A673 (cell line): ENCODE measurements at regions of chrX and their contacts with region 1.

Region 1: DNA sequence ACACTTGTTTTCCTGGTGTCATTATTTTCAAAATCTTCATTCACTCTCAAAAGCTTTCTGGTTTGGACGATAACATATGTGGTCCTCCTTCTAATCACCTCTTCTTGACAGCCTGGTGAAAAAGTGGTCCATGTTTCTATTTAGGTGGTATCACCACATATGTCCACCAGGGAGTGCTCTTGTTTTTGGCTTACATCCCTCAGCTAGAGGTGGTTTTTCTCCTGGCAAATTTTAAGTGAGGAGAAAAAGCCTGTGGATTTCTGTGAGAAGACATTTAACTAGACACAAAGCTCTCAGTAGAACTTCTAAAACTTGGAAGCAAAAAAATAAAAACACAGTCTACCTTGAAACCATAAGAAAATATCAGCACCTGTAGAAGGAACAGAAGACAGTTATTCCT is 58.0 kb upstream of the FRMPD4 start:
- DNase-seq: peak; percentile 37
- H3K4me3 ChIP-seq: no peak overlapping the region
- H3K27ac ChIP-seq: no peak overlapping the region
- H3K4me1 ChIP-seq: no peaks in the 10 kb centered on the region
- H3K27me3 ChIP-seq: no peaks in the 10 kb centered on the region
- CTCF ChIP-seq: peak; percentile 57

Region 2: GRCh38 chrX:12567857-12568256 is 487.6 kb after region 1 on chrX:
- CTCF ChIA-PET with region 1: no interaction called
- POLR2A ChIA-PET with region 1: no interaction called
- intact Hi-C with region 1: loop called (anchors 10 kb)
- DNase-seq: peak; percentile 14
- H3K4me3 ChIP-seq: no peak overlapping the region
- H3K27ac ChIP-seq: no peak overlapping the region
- H3K4me1 ChIP-seq: no peaks in the 10 kb centered on the region
- H3K27me3 ChIP-seq: no peaks in the 10 kb centered on the region
- CTCF ChIP-seq: peak; percentile 73

Region 3: GRCh38 chrX:12701628-12702027 is 621.4 kb after region 1 on chrX:
- CTCF ChIA-PET with region 1: no interaction called
- POLR2A ChIA-PET with region 1: no interaction called
- intact Hi-C with region 1: loop called (anchors 5 kb)
- DNase-seq: peak; percentile 70
- H3K4me3 ChIP-seq: no peak overlapping the region
- H3K27ac ChIP-seq: no peak overlapping the region
- H3K4me1 ChIP-seq: no peaks in the 10 kb centered on the region
- H3K27me3 ChIP-seq: peaks cover 18% of the 10 kb centered on the region
- CTCF ChIP-seq: peak; percentile 69